Common myeloid progenitor, CD34-positive (primary cell): ENCODE measurements at regions of chr14 and their contacts with region 1.

Region 1: GRCh38 chr14:55201224-55202050 is 10.1 kb upstream of the DLGAP5 start:
- DNase-seq: no peak
- H3K4me3 ChIP-seq: no peak overlapping the region
- H3K27ac ChIP-seq: no peak overlapping the region
- H3K4me1 ChIP-seq: no peaks in the 10 kb centered on the region
- H3K27me3 ChIP-seq: no peaks in the 10 kb centered on the region

Region 2: GRCh38 chr14:54893151-54893760 is 308.2 kb before region 1 on chr14:
- CTCF ChIA-PET with region 1: no interaction called
- POLR2A ChIA-PET with region 1: no interaction called
- DNase-seq: peak; percentile 49 to 67 (median 66)
- H3K4me3 ChIP-seq: no peak overlapping the region
- H3K27ac ChIP-seq: no peak overlapping the region
- H3K4me1 ChIP-seq: peaks cover 0 to 22% (median 5%) of the 10 kb centered on the region in 4 experiments
- H3K27me3 ChIP-seq: no peaks in the 10 kb centered on the region

Region 3: DNA sequence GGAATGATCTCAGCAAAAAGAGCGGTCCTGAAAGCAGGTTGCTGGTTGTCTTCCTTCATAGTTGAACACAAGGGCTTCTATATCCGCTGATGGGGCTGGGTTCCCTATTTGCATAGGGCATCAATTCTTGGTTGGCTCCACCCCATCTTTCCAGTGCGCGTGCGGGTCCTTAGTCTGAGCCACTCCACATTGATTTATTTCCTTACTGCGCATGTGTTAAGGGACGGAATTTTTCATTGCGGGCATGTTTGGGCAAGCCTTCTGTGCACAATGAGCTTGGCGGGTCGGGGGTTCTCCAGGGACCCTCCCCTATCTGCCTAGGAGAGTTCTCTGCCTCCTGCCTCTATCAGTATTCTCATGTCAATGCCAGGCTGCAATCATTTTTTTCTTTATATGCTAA is 11.2 kb after region 1 on chr14:
- CTCF ChIA-PET with region 1: interaction called, 23 read pairs
- POLR2A ChIA-PET with region 1: no interaction called
- DNase-seq: peak in 2 of 3 donors; percentile 13 to 17
- H3K4me3 ChIP-seq: no peak overlapping the region
- H3K27ac ChIP-seq: no peak overlapping the region
- H3K4me1 ChIP-seq: peaks cover 0 to 1% (median 0%) of the 10 kb centered on the region in 4 experiments
- H3K27me3 ChIP-seq: no peaks in the 10 kb centered on the region